Cardiac septum (tissue), 1 donor: ENCODE measurements at regions of chr1 and their contacts with region 1.

Region 1: DNA sequence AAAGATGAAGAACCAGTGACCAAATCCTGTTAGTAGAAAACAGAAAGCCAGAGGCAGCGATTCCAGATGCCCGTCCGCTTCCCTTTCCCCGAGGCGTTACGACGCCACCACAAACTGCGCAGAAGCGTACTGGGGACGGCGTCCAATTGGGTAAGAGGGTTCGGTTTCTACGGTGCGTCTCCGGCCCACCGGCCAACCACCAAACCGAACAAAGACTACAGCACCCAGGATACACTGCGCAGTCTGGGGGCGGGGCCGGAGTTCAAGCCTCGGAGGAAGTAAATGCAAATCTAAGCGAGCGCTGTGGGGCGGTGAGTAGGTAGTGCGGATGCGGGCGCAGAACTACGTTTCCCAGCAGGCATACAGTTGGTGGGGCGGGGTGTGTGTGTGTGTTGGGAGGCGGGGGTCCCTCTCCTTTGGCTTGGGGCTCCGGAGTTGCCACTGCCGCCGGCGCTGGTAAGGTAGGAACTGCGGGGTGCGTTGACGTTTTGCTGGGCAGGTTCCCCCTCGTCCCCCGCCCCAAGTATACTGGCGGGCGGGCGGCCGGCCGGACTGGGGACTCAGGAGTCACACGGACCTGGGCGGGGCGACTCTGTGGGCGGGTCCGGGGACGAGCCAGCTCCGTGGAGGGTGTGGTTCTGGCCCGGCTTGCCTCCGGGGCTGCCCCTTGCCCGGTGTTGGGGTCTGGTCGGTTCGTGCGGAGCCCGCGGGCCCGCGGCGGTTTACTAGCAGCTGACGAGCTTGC is at the starts of genes SWT1 and TRMT1L:
- DNase-seq: peak; percentile 99
- total RNA-seq, gene SWT1: 5.3 TPM
- total RNA-seq, gene TRMT1L: 20.6 TPM

Region 2: DNA sequence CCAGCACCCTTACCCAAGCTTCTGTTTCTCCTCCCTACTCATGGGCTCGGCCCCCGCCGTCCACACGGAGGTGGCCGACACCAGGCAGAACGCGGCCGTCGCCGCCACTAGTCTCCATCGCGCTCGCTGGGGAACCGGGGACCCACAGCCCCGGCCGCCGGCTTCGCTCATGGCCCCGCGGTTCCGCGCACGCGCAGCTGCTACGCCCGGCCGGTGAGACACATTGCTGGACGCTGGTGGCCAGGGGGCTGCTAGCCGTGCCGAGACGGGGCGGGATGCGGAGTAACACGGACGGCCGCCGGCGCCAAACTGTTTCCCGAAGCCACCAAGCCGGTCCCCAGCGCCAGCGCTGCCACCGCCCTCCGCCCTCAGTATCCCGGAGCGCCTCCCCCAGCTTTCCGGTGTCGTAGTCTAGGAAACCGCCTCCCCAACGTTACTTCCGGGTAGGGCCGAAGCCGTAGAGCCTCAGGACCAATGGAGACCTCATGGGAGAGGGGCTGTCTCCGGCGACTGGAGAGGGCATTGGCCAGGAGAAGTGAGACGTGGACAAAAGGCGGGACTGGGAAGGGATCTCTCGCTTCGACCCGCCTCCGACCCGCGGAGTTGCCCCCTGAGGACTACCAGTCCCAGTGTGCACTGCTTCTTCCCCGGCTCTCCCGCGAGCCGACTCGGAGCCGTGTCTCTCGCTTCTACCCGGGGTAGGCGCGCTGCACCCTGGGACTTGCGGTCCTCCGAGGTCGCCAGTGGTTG is 402.4 kb before region 1 on chr1 and contains the start of gene EDEM3:
- intact Hi-C with region 1: loop called (anchors 1 kb)
- DNase-seq: peak; percentile 99
- total RNA-seq, gene EDEM3: 18.5 TPM

Region 3: DNA sequence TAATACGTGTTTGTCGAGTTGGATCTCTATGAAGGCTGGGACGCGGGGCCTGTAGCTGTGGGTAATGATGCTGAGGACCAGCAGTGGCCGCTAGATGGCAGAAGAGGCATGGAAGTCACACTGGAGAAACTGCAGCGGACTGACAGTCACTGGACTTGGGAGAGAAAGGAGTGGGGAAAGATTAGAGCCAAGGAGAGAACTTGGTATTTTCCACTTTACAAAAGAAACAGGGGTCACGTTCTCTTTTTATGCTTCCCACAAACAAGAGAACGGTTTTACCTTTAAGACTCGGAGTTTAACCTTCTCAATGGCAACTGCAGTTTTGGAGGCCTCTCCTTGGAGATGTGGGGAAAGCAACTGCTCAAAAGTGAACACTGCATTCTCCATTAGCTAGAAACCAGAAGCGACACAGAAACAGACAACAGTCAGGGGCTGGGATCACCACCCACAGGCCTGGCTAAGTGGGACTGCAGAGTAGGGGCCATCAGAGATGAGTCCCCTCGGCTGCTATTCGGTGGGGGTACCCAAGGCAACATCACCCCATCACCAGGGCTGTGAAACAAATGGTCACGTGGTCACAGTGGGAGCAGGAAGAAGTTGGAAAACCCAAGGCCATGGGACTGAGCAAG is 351.2 kb before region 1 on chr1:
- intact Hi-C with region 1: loop called (anchors 5 kb)
- DNase-seq: peak; percentile 95

Region 4: DNA sequence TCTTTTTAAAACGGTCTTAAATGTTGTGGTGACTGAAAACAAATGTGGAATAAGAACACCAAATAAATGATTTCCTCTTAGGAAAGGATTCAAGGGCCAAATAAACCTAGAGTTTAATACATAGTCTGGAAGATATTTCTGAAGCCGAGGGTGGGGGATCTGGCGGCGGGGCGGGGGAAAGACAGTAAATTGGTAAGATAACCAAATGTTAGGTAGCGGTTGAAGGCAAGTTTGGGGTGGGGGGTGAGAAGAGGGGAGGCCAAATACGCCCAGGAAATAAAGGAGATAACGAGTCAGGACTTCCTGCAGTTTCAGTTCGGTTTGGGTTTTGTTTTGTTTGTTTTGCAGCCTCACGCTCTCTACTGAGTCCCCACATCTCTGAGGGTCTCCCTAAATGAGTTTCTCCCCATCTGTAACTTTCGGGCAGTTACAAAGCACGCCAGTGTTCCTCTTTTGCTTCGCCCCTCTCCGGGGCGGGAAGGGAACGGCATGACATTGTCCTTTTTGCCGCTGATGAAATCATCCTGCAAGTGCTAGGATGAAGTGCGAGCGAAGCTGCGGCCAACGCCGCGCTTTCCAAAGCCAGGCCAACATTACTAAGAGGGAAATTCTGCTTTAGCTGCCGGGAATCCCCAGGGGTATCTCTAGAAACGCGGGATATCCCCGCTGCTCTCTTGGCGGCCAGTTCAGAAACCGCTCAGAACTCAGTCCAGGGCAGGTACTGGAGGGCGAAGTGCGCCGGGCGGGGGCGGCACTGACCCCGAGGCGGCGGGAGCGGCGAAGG is 183.6 kb before region 1 on chr1:
- intact Hi-C with region 1: loop called (anchors 5 kb)
- DNase-seq: peak; percentile 89

Region 5: GRCh38 chr1:185044981-185045813 is 111.8 kb before region 1 on chr1 and contains the start of gene RNF2:
- intact Hi-C with region 1: loop called (anchors 2 kb)
- DNase-seq: peak; percentile 91
- total RNA-seq, gene RNF2: 17.2 TPM

Region 6: DNA sequence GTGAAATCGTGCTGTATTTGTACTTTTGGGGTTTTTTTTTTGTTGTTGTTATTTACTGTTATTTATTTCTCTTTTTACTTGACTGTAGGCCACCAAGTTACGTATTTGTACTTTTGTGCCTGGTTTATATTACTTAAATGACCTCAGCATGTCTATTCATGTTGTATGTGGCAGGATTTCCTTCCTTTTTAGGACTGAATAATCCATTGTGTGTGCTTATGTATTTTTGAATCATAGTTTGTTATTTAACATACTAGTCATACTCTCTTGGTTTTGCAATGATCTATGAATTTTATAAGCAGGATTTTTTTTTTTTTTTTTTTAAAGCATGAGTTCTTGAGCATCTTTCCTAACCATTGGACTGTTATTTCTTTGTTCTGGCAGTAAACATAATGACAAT is 60.5 kb before region 1 on chr1:
- intact Hi-C with region 1: no loop called
- DNase-seq: no peak

Region 7: GRCh38 chr1:185112356-185112755 is 44.7 kb before region 1 on chr1:
- intact Hi-C with region 1: no loop called
- DNase-seq: no peak

Region 8: GRCh38 chr1:185317034-185317885 is 160.2 kb after region 1 on chr1 and contains the start of gene IVNS1ABP:
- intact Hi-C with region 1: loop called (anchors 5 kb)
- DNase-seq: peak; percentile 98
- total RNA-seq, gene IVNS1ABP: 116 TPM

Region 9: DNA sequence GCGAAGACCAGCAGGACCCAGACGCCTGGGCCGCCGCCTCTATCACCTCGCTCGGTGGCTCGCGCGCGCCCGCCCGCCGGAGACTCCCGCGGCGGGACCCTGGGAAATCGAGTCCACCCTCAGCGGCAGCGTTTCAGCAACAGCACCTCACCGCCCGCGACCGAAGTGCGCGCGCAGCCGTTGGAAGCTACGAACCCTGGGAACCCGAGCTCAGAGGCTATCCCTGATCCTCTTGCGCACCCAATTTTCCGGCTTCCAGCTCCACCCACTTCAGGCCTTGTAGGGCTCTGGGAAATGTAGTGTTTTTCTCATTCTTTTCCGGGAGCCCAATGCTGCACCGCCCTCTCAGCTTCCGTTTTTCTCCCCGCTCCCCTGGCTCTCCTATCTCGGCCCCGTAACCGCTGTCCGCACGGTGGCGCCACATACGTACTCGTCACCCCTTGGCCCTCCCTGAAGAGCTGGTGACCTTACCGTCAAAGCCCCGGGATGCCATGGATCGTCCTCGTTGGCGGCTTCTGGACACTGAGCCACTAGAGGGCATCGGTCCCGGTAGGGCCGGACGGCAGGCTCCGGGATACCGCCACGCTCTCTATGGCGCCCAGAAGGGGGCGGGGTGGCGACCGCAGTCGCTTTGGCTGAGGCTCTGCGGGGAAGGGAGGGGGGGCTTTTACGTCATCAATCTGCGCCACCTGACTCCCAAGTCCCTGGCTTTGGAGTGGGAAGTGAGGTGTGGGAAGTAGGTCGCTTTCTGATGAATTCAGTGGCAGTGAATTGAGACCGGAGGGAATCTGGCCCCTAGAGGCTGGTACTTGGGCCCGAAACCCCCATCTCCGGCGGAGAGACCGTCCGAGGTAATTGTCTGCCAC is 1218.3 kb after region 1 on chr1 and contains the starts of genes ODR4 and TPR:
- intact Hi-C with region 1: loop called (anchors 5 kb)
- DNase-seq: peak; percentile 99
- total RNA-seq, gene ODR4: 12.9 TPM
- total RNA-seq, gene TPR: 82.6 TPM